ENCODE measurements at regions of chr1 and their contacts with region 1.

Region 1: GRCh38 chr1:230772457-230773395 is 25.5 kb downstream of the CAPN9 start:
- DNase-seq: peak; percentile 88
- ATAC-seq: peak; percentile 96
- H3K4me3 ChIP-seq: no peak overlapping the region
- H3K27ac ChIP-seq: no peak overlapping the region
- H3K4me1 ChIP-seq: peaks cover 4% of the 10 kb centered on the region; the same call in 1 of the 2 replicates
- H3K27me3 ChIP-seq: peaks cover 14% of the 10 kb centered on the region
- CTCF ChIP-seq: peak; percentile 98

Region 2: DNA sequence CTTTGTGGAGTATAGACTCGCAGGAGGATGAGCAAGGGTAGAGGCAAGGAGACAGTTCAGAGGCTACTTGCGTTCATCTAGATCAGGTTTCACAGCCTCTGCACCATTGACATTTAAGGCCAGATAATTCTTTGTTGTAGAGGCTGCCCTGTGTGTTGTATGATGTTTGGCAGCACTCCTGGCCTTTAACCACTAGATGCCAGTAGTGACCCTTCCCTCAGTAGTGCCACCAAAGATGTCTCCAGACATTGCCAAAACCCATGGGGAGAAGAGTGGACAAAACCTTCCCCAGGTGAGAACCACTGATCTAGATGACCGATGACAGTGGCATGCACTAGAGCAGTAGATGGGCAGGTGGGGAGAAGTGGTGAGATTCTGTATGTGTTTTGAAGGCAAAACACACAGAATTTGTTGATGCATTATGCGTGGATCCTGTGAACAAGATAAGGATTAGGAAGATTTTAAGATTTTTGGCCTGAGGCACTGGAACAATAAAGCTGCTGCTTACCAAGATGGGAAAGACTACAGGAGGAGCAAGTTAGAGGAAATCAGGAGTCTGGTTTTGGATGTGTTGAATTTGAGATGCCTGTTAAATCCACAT is 140.4 kb before region 1 on chr1:
- CTCF ChIA-PET with region 1: no interaction called
- POLR2A ChIA-PET with region 1: no interaction called
- intact Hi-C with region 1: loop called (anchors 1 kb)
- DNase-seq: peak; percentile 85
- ATAC-seq: peak; percentile 95
- H3K4me3 ChIP-seq: no peak overlapping the region
- H3K27ac ChIP-seq: no peak overlapping the region
- H3K4me1 ChIP-seq: no peaks in the 10 kb centered on the region
- H3K27me3 ChIP-seq: peaks cover 47% of the 10 kb centered on the region
- CTCF ChIP-seq: peak; percentile 98

Region 3: GRCh38 chr1:230642263-230642959 is 130.3 kb before region 1 on chr1 and contains the start of gene COG2:
- CTCF ChIA-PET with region 1: interaction called, 16 read pairs
- POLR2A ChIA-PET with region 1: no interaction called
- intact Hi-C with region 1: loop called (anchors 1 kb)
- DNase-seq: peak; percentile 99
- ATAC-seq: peak; percentile 94
- H3K4me3 ChIP-seq: peak within 1 kb of the TSS; percentile 86
- H3K27ac ChIP-seq: peak within 1 kb of the TSS; percentile 35
- H3K4me1 ChIP-seq: peaks cover 25% of the 10 kb centered on the region
- H3K27me3 ChIP-seq: peaks cover 30% of the 10 kb centered on the region
- CTCF ChIP-seq: peak; percentile 100
- total RNA-seq, gene COG2: 42.0 and 51.0 TPM in 2 replicates

Region 4: DNA sequence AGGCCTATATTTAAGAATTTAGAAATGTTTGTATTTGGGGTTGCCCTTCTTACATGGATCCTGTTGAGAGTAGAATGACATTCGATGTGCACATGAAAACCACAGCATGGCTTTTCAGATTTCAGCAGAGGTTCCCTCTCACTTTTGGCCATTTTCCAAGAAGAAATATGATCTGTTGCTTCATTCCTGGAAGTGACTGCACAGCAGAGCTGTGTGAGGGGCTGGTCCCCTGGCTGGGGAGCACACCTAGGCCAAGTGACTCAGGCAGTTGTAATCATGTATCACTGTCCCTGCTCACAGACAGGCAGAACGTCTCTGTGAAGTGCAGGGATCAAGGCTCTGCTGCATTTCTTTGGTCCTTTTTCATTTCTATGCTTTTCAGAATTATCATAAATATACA is 91.1 kb before region 1 on chr1:
- CTCF ChIA-PET with region 1: no interaction called
- POLR2A ChIA-PET with region 1: no interaction called
- intact Hi-C with region 1: loop called (anchors 1 kb)
- DNase-seq: peak; percentile 100
- ATAC-seq: peak; percentile 98
- H3K4me3 ChIP-seq: no peak overlapping the region
- H3K27ac ChIP-seq: peak overlapping the region; percentile 71
- H3K4me1 ChIP-seq: peaks cover 43% of the 10 kb centered on the region
- H3K27me3 ChIP-seq: no peaks in the 10 kb centered on the region
- CTCF ChIP-seq: no peak

Region 5: DNA sequence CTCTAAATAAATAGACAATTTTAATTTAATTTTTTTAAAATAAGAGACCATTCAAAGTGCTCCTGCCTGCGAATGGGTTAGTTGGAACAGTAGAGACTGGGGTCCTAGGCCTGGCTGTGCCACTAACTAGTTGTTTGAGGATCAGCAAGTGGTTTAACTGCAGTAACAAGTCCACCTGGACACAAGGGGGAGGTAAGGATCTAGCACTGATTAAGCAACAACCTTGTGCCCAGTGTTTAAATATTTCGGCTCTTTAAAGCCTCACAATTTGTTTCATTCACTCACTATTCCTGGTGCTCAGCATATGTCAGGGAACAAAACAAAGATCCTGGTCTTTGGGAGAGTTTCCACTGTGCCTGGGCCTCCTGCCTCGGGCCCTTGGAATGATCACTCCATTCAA is 57.2 kb before region 1 on chr1:
- CTCF ChIA-PET with region 1: no interaction called
- POLR2A ChIA-PET with region 1: no interaction called
- intact Hi-C with region 1: loop called (anchors 1 kb)
- DNase-seq: no peak
- ATAC-seq: no peak
- H3K4me3 ChIP-seq: no peak overlapping the region
- H3K27ac ChIP-seq: no peak overlapping the region
- H3K4me1 ChIP-seq: peaks cover 11% of the 10 kb centered on the region
- H3K27me3 ChIP-seq: no peaks in the 10 kb centered on the region
- CTCF ChIP-seq: peak; percentile 47

Region 6: DNA sequence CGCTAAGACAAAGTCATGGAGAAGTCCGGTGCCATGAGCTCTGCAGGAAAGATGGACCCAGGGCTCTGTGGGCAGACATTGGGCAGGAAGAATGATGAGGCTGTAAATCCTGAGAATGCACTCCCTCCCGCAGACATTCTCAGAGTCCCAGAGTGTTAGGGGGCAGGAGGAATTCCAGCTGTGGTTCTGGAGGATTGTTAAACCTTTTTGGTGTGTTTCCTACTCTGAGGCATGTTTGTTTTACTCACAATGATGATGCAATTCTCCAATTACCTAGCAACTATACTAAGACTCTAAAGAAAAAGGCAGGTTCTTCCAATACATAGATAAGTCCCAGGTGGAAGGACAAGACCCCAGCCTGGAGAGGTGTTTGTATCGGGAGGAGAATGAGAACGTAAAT is 28.3 kb before region 1 on chr1:
- CTCF ChIA-PET with region 1: interaction called, 66 read pairs
- POLR2A ChIA-PET with region 1: interaction called, 4 read pairs
- intact Hi-C with region 1: loop called (anchors 1 kb)
- DNase-seq: peak; percentile 79
- ATAC-seq: peak; percentile 53
- H3K4me3 ChIP-seq: no peak overlapping the region
- H3K27ac ChIP-seq: no peak overlapping the region
- H3K4me1 ChIP-seq: peaks cover 23% of the 10 kb centered on the region
- H3K27me3 ChIP-seq: no peaks in the 10 kb centered on the region
- CTCF ChIP-seq: no peak

Region 7: DNA sequence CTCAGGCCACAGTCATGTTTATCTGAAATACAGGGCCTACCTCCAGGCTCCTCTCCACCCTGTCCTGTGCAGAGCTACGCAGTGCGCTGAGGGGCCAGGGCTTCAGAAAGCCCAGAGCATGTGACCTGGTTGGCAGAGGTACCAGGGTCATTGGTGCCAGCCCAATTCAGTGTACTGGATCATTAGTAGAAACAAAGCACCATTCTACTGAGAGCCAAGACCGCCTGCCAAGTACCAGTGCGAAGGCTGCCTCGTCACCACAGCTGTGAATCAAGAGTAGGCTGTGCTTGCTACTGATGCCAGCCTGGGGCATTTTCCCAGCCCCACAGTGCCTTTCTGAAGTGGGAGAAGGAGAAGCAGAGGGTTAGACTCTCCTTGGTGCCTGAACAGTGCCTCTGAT is 34.3 kb after region 1 on chr1:
- CTCF ChIA-PET with region 1: no interaction called
- POLR2A ChIA-PET with region 1: no interaction called
- intact Hi-C with region 1: no loop called
- DNase-seq: no peak
- ATAC-seq: no peak
- H3K4me3 ChIP-seq: no peak overlapping the region
- H3K27ac ChIP-seq: no peak overlapping the region
- H3K4me1 ChIP-seq: no peaks in the 10 kb centered on the region
- H3K27me3 ChIP-seq: 0 out of 2 replicates have a peak, but pooled peaks cover 4% of the 10 kb centered on the region
- CTCF ChIP-seq: no peak

Measured in PC-3 (cell line).